Activated CD8-positive, alpha-beta T cell treated with anti-CD3 and anti-CD28 coated beads for 36 hours (primary cell): ENCODE measurements at regions of chr17 and their contacts with region 1.

Region 1: DNA sequence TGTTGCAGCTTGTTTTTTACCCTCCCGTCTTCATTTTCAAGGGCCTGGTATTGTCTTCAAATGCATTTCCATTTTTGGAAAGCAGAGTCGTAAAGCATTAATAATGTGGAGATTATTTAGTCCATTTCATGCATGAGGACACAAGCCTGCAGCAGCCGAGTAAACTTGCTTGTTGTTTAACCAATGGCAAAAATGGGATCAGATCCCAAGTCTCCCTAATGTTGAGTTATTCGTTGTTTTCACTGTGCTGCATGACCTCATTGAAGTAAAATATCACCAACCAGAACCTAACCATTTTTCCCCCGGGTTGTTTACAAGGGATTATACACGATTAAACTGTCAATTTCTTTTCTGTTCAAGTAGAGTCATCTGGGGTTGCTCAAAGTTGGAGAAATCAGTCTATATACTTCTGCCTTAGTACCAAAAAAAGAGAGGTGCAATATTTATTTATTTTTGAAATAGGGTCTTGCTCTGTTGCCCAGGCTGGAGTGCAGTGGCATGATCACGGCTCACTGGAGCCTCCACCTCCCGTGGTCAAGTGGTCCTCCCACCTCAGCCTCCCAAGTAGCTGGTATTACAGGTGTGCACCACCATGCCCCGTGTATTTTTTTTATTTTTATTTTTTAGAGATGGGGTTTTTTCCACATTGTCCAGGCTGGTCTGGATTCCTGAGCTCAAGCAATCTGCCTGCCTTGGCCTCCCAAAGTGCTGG is 12.4 kb downstream of the AMZ2 start:
- DNase-seq: no peak
- ATAC-seq: no peak
- H3K4me3 Mint-ChIP-seq: peak overlapping the region; percentile 69
- H3K27ac Mint-ChIP-seq: peak overlapping the region; percentile 93
- H3K4me1 Mint-ChIP-seq: peaks cover 63% of the 10 kb centered on the region
- H3K27me3 Mint-ChIP-seq: no peaks in the 10 kb centered on the region
- CTCF ChIP-seq: no peak

Region 2: GRCh38 chr17:68035523-68036303 is 224.5 kb before region 1 on chr17 and contains the start of gene KPNA2:
- CTCF ChIA-PET with region 1: no interaction called
- POLR2A ChIA-PET with region 1: no interaction called
- intact Hi-C with region 1: no loop called
- DNase-seq: peak; percentile 93
- ATAC-seq: peak; percentile 91
- H3K4me3 Mint-ChIP-seq: peak within 1 kb of the TSS; percentile 96
- H3K27ac Mint-ChIP-seq: peak within 1 kb of the TSS; percentile 96
- H3K4me1 Mint-ChIP-seq: peaks cover 15% of the 10 kb centered on the region
- H3K27me3 Mint-ChIP-seq: no peaks in the 10 kb centered on the region
- CTCF ChIP-seq: no peak
- total RNA-seq, gene KPNA2: 165 to 180 TPM

Region 3: GRCh38 chr17:68441064-68441770 is 181.0 kb after region 1 on chr17:
- CTCF ChIA-PET with region 1: interaction called, 122 read pairs
- POLR2A ChIA-PET with region 1: interaction called, 4 read pairs
- intact Hi-C with region 1: loop called (anchors 2 kb)
- DNase-seq: no peak
- ATAC-seq: no peak
- H3K4me3 Mint-ChIP-seq: no peak overlapping the region
- H3K27ac Mint-ChIP-seq: peak overlapping the region; percentile 61
- H3K4me1 Mint-ChIP-seq: peaks cover 29% of the 10 kb centered on the region
- H3K27me3 Mint-ChIP-seq: no peaks in the 10 kb centered on the region
- CTCF ChIP-seq: no peak

Region 4: GRCh38 chr17:68463211-68464019 is 203.2 kb after region 1 on chr17:
- CTCF ChIA-PET with region 1: interaction called, 43 read pairs
- POLR2A ChIA-PET with region 1: no interaction called
- intact Hi-C with region 1: loop called (anchors 2 kb)
- DNase-seq: no peak
- ATAC-seq: no peak
- H3K4me3 Mint-ChIP-seq: no peak overlapping the region
- H3K27ac Mint-ChIP-seq: no peak overlapping the region
- H3K4me1 Mint-ChIP-seq: peaks cover 45% of the 10 kb centered on the region
- H3K27me3 Mint-ChIP-seq: peaks cover 2% of the 10 kb centered on the region
- CTCF ChIP-seq: no peak

Region 5: GRCh38 chr17:68480885-68481284 is 220.7 kb after region 1 on chr17:
- CTCF ChIA-PET with region 1: no interaction called
- POLR2A ChIA-PET with region 1: no interaction called
- intact Hi-C with region 1: no loop called
- DNase-seq: no peak
- ATAC-seq: no peak
- H3K4me3 Mint-ChIP-seq: no peak overlapping the region
- H3K27ac Mint-ChIP-seq: no peak overlapping the region
- H3K4me1 Mint-ChIP-seq: no peaks in the 10 kb centered on the region
- H3K27me3 Mint-ChIP-seq: peaks cover 9% of the 10 kb centered on the region
- CTCF ChIP-seq: no peak

Region 6: DNA sequence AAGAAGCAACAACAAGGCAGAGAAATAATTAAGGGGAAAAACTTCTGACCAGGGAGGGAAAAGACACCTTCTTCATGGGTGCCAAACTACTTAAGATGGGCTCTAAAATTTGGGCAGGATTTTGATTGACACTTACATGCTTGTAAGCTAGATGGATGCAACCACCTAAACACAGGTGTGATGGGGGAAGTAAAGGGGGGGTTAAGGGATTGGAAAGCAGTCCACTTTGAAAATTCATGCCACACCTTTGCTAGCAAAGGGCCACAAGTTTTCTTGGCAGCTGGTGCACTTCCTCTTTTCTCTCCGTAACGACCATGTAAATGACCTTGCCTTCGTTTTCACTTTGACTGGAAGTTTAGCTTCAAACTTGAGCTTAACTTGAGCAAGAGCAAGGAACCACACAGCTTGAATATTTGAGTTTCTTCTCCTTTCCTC is 237.7 kb after region 1 on chr17:
- CTCF ChIA-PET with region 1: no interaction called
- POLR2A ChIA-PET with region 1: no interaction called
- intact Hi-C with region 1: no loop called
- DNase-seq: no peak
- ATAC-seq: peak; percentile 66
- H3K4me3 Mint-ChIP-seq: peak overlapping the region; percentile 38
- H3K27ac Mint-ChIP-seq: peak overlapping the region; percentile 70
- H3K4me1 Mint-ChIP-seq: peaks cover 17% of the 10 kb centered on the region
- H3K27me3 Mint-ChIP-seq: peaks cover 6% of the 10 kb centered on the region
- CTCF ChIP-seq: no peak